Vagina (tissue), 2 donors: ENCODE measurements at regions of chr9 and their contacts with region 1.

Region 1: GRCh38 chr9:10764481-10764880 is 151.7 kb upstream of the PTPRD start:
- DNase-seq: no peak
- H3K4me3 ChIP-seq: no peak overlapping the region
- H3K27ac ChIP-seq: no peak overlapping the region
- H3K4me1 ChIP-seq: no peaks in the 10 kb centered on the region
- H3K27me3 ChIP-seq: no peaks in the 10 kb centered on the region
- CTCF ChIP-seq: no peak
- POLR2A ChIP-seq: no peak

Region 2: GRCh38 chr9:10605388-10605787 is 159.1 kb before region 1 on chr9:
- intact Hi-C with region 1: loop called (anchors 5 kb)
- DNase-seq: no peak
- H3K4me3 ChIP-seq: no peak overlapping the region
- H3K27ac ChIP-seq: no peak overlapping the region
- H3K4me1 ChIP-seq: no peaks in the 10 kb centered on the region
- H3K27me3 ChIP-seq: no peaks in the 10 kb centered on the region
- CTCF ChIP-seq: no peak
- POLR2A ChIP-seq: no peak

Region 3: GRCh38 chr9:11269036-11269435 is 504.6 kb after region 1 on chr9:
- intact Hi-C with region 1: no loop called
- DNase-seq: no peak
- H3K4me3 ChIP-seq: no peak overlapping the region
- H3K27ac ChIP-seq: no peak overlapping the region
- H3K4me1 ChIP-seq: no peaks in the 10 kb centered on the region
- H3K27me3 ChIP-seq: no peaks in the 10 kb centered on the region
- CTCF ChIP-seq: no peak
- POLR2A ChIP-seq: no peak